Activated CD4-positive, alpha-beta T cell treated with anti-CD3 and anti-CD28 coated beads for 36 hours (primary cell): ENCODE measurements at regions of chrX and their contacts with region 1.

Region 1: GRCh38 chrX:48696301-48697181 is at the start of gene SUV39H1:
- DNase-seq: peak; percentile 92
- ATAC-seq: peak; percentile 94
- H3K4me3 Mint-ChIP-seq: peak within 1 kb of the TSS; percentile 91
- H3K27ac Mint-ChIP-seq: peak within 1 kb of the TSS; percentile 92
- H3K4me1 Mint-ChIP-seq: peaks cover 19% of the 10 kb centered on the region
- H3K27me3 Mint-ChIP-seq: no peaks in the 10 kb centered on the region
- total RNA-seq, gene SUV39H1: 30.8 to 31.7 TPM

Region 2: DNA sequence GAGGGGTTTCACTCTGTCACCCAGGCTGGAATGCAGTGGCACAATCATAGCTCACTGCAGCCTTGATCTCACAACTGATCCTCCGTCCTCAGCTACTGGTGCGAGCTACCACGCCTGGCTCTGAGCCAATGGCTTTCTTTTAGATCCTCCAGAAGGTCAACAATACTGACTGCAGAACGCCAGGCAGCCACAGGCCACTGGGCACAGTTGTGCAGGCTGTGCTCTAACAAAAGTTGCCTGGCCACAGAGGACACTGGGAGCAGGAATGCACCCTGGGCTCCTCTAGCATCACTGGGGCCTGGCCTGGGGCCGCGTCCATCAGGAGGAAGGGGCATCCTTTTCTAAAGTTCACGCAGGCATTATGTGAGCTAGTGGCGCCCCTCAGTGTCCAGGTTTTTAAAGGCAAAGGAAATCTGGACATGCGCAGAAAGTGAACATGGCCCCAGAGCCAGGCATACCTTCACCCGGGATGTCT is 202.6 kb before region 1 on chrX:
- CTCF ChIA-PET with region 1: no interaction called
- POLR2A ChIA-PET with region 1: no interaction called
- intact Hi-C with region 1: no loop called
- DNase-seq: peak; percentile 52
- ATAC-seq: peak; percentile 44
- H3K4me3 Mint-ChIP-seq: no peak overlapping the region
- H3K27ac Mint-ChIP-seq: no peak overlapping the region
- H3K4me1 Mint-ChIP-seq: no peaks in the 10 kb centered on the region
- H3K27me3 Mint-ChIP-seq: no peaks in the 10 kb centered on the region

Region 3: GRCh38 chrX:48574270-48575266 is 122.0 kb before region 1 on chrX and contains the start of gene RBM3:
- CTCF ChIA-PET with region 1: no interaction called
- POLR2A ChIA-PET with region 1: no interaction called
- intact Hi-C with region 1: loop called in 1 of 2 experiments (anchors 5 kb)
- DNase-seq: peak; percentile 95
- ATAC-seq: peak; percentile 91
- H3K4me3 Mint-ChIP-seq: peak within 1 kb of the TSS; percentile 99
- H3K27ac Mint-ChIP-seq: peak within 1 kb of the TSS; percentile 100
- H3K4me1 Mint-ChIP-seq: peaks cover 25% of the 10 kb centered on the region
- H3K27me3 Mint-ChIP-seq: no peaks in the 10 kb centered on the region
- total RNA-seq, gene RBM3: 164 to 202 TPM

Region 4: DNA sequence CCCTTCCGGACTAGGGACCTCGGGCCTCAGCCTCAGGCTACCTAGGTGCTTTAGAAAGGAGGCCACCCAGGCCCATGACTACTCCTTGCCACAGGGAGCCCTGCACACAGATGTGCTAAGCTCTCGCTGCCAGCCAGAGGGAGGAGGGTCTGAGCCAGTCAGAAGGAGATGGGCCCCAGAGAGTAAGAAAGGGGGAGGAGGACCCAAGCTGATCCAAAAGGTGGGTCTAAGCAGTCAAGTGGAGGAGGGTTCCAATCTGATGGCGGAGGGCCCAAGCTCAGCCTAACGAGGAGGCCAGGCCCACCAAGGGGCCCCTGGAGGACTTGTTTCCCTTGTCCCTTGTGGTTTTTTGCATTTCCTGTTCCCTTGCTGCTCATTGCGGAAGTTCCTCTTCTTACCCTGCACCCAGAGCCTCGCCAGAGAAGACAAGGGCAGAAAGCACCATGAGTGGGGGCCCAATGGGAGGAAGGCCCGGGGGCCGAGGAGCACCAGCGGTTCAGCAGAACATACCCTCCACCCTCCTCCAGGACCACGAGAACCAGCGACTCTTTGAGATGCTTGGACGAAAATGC is 13.0 kb before region 1 on chrX and contains the start of gene WAS:
- CTCF ChIA-PET with region 1: no interaction called
- POLR2A ChIA-PET with region 1: interaction called, 15 read pairs
- intact Hi-C with region 1: loop called in 1 of 2 experiments (anchors 1 kb)
- DNase-seq: peak; percentile 68
- ATAC-seq: peak; percentile 85
- H3K4me3 Mint-ChIP-seq: peak within 1 kb of the TSS; percentile 93
- H3K27ac Mint-ChIP-seq: peak within 1 kb of the TSS; percentile 96
- H3K4me1 Mint-ChIP-seq: peaks cover 49% of the 10 kb centered on the region
- H3K27me3 Mint-ChIP-seq: no peaks in the 10 kb centered on the region
- total RNA-seq, gene WAS: 85.9 to 102 TPM

Region 5: DNA sequence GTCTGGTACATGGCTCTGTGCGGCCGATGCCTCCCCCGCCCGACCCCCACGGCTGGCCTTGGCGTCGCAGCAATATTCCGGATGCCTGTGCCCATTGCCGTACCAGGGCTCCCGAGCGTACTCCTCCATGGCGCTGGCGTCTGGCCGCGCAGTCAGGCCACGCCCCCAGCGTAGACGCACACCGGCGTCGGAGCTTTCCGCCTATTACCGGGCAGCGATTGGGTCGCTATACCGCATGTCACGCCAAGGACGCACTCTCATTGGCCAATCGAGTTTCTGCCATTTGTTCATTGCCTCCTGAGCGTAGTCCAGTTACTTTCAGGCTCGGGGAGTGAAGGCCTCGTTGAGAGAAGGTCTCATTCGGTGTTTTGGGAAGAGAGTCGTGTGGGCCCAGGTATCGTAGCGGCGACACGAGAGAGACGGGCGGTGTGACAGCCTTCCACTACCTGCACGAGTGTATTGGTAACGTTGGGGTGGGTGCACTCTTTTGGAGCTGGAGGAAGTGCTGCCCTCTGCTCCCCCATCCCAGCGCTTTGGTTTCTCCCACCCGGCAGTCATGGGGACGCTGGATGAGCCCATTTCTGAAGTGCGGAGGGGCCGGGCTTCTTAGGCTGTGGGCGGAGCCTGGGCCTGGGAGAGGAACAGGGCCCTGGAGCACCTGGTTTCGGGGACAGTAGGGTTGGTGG is 201.2 kb after region 1 on chrX and contains the starts of genes PQBP1 and TIMM17B:
- CTCF ChIA-PET with region 1: interaction called, 5 read pairs
- POLR2A ChIA-PET with region 1: interaction called, 7 read pairs
- intact Hi-C with region 1: loop called in 1 of 2 experiments (anchors 1 kb)
- DNase-seq: peak; percentile 92
- ATAC-seq: peak; percentile 94
- H3K4me3 Mint-ChIP-seq: peak within 1 kb of the TSS; percentile 81
- H3K27ac Mint-ChIP-seq: peak within 1 kb of the TSS; percentile 94
- H3K4me1 Mint-ChIP-seq: peaks cover 19% of the 10 kb centered on the region
- H3K27me3 Mint-ChIP-seq: no peaks in the 10 kb centered on the region
- total RNA-seq, gene PQBP1: 73.4 to 75.3 TPM
- total RNA-seq, gene TIMM17B: 54.2 to 58.9 TPM

Region 6: GRCh38 chrX:49100704-49101628 is 404.4 kb after region 1 on chrX:
- CTCF ChIA-PET with region 1: no interaction called
- POLR2A ChIA-PET with region 1: interaction called, 4 read pairs
- intact Hi-C with region 1: loop called in 1 of 2 experiments (anchors 2 kb)
- DNase-seq: peak; percentile 92
- ATAC-seq: peak; percentile 97
- H3K4me3 Mint-ChIP-seq: peak overlapping the region; percentile 85
- H3K27ac Mint-ChIP-seq: peak overlapping the region; percentile 89
- H3K4me1 Mint-ChIP-seq: peaks cover 7% of the 10 kb centered on the region
- H3K27me3 Mint-ChIP-seq: no peaks in the 10 kb centered on the region